ENCODE measurements at regions of chr11 and their contacts with region 1.

Region 1: DNA sequence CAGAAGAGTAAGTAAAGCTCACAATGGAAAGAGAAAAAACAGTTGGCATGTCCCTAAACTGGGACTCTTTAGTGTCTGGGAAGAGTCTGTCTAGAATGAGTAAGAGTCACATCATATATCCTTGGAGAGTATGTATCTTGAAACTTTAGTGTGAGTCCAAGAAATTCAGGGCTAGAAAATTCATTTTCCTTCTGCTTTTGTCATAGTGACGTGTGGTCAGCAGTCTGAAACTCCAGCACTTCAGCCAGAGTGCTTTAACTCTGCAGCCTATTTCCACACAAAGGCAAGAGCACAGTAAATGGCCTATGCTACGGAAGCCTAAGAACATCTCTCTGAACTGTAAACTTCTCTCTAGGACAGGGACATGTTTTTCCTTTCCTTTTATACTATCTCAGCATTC is 174.1 kb downstream of the FAM181B start:
- DNase-seq: no peak
- ATAC-seq: no peak

Region 2: GRCh38 chr11:82229341-82229740 is 330.3 kb before region 1 on chr11:
- intact Hi-C with region 1: no loop called
- DNase-seq: no peak
- ATAC-seq: no peak

Region 3: GRCh38 chr11:82539669-82540068 is 19.9 kb before region 1 on chr11:
- intact Hi-C with region 1: loop called (anchors 1 kb)
- DNase-seq: no peak
- ATAC-seq: no peak

Measured in sciatic nerve (tissue), 2 donors.